B cell (primary cell): ENCODE measurements at regions of chr21 and their contacts with region 1.

Region 1: GRCh38 chr21:37220981-37221664 is 46.0 kb downstream of the VPS26C start:
- DNase-seq: peak; percentile 93
- ATAC-seq: peak; percentile 90
- H3K4me3 ChIP-seq: peak overlapping the region; percentile 36 to 86 (median 78)
- H3K4me3 Mint-ChIP-seq: peak overlapping the region; percentile 96
- H3K27ac ChIP-seq: peak overlapping the region; percentile 68 to 72
- H3K27ac Mint-ChIP-seq: peak overlapping the region; percentile 91
- H3K4me1 ChIP-seq: peaks cover 15 to 30% of the 10 kb centered on the region in 2 donors
- H3K4me1 Mint-ChIP-seq: peaks cover 27% of the 10 kb centered on the region
- H3K27me3 ChIP-seq: no peaks in the 10 kb centered on the region
- H3K27me3 Mint-ChIP-seq: no peaks in the 10 kb centered on the region
- CTCF ChIP-seq: peak; percentile 24

Region 2: GRCh38 chr21:36976882-36977651 is 244.1 kb before region 1 on chr21:
- CTCF ChIA-PET with region 1: no interaction called
- POLR2A ChIA-PET with region 1: no interaction called
- intact Hi-C with region 1: loop called (anchors 2 kb)
- DNase-seq: peak; percentile 76
- ATAC-seq: peak; percentile 88
- H3K4me3 ChIP-seq: no peak overlapping the region
- H3K4me3 Mint-ChIP-seq: peak overlapping the region; percentile 47
- H3K27ac ChIP-seq: no peak overlapping the region
- H3K27ac Mint-ChIP-seq: peak overlapping the region; percentile 77
- H3K4me1 ChIP-seq: peaks cover 16 to 22% of the 10 kb centered on the region in 2 donors
- H3K4me1 Mint-ChIP-seq: peaks cover 24% of the 10 kb centered on the region
- H3K27me3 ChIP-seq: peaks cover 0 to 13% (median 5%) of the 10 kb centered on the region in 4 experiments
- H3K27me3 Mint-ChIP-seq: peaks cover 3% of the 10 kb centered on the region
- CTCF ChIP-seq: peak; percentile 72

Region 3: DNA sequence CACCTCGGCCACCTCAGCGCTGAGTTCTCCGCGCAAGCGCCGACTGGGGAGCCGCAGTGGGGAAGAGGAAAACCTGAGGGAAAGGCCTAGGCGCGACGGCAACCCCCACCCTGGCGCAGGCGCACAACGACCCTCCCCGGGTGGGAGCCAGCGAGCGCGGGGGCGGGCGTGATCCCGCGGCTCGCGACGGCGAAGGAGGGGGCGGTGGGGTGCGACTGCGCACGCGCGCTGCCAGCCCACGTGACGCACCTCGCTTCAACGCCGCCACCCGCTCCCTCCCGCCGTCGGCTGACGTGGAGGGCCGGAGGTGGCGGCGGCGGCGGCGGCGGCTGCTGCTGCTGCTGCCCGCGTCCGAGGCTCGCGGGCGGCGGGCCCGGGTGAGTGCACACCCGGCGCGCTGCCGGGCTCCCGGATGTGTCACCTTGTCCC is 148.1 kb before region 1 on chr21 and contains the starts of genes PIGP and TTC3:
- CTCF ChIA-PET with region 1: no interaction called
- POLR2A ChIA-PET with region 1: no interaction called
- intact Hi-C with region 1: loop called (anchors 2 kb)
- DNase-seq: peak; percentile 98
- ATAC-seq: peak; percentile 67
- H3K4me3 ChIP-seq: peak within 1 kb of the TSS; percentile 80 to 92 (median 86)
- H3K4me3 Mint-ChIP-seq: peak within 1 kb of the TSS; percentile 98
- H3K27ac ChIP-seq: peak within 1 kb of the TSS; percentile 98
- H3K27ac Mint-ChIP-seq: peak within 1 kb of the TSS; percentile 99
- H3K4me1 ChIP-seq: peaks cover 22 to 23% of the 10 kb centered on the region in 2 donors
- H3K4me1 Mint-ChIP-seq: peaks cover 46% of the 10 kb centered on the region
- H3K27me3 ChIP-seq: no peaks in the 10 kb centered on the region
- H3K27me3 Mint-ChIP-seq: no peaks in the 10 kb centered on the region
- CTCF ChIP-seq: no peak
- total RNA-seq, gene PIGP: 21.7 and 22.7 TPM in 2 replicates
- total RNA-seq, gene TTC3: 163 and 191 TPM in 2 replicates

Region 4: GRCh38 chr21:37208056-37208721 is 12.9 kb before region 1 on chr21:
- CTCF ChIA-PET with region 1: interaction called, 3 read pairs
- POLR2A ChIA-PET with region 1: no interaction called
- intact Hi-C with region 1: loop called (anchors 1 kb)
- DNase-seq: peak; percentile 80
- ATAC-seq: peak; percentile 65
- H3K4me3 ChIP-seq: peak overlapping the region in 4 of 5 experiments; percentile 12 to 68 (median 34)
- H3K4me3 Mint-ChIP-seq: peak overlapping the region; percentile 76
- H3K27ac ChIP-seq: peak overlapping the region; percentile 54 to 79
- H3K27ac Mint-ChIP-seq: peak overlapping the region; percentile 78
- H3K4me1 ChIP-seq: peaks cover 27 to 34% of the 10 kb centered on the region in 2 donors
- H3K4me1 Mint-ChIP-seq: peaks cover 40% of the 10 kb centered on the region
- H3K27me3 ChIP-seq: no peaks in the 10 kb centered on the region
- H3K27me3 Mint-ChIP-seq: no peaks in the 10 kb centered on the region
- CTCF ChIP-seq: no peak

Region 5: GRCh38 chr21:37257967-37258877 is 37.1 kb after region 1 on chr21:
- CTCF ChIA-PET with region 1: interaction called, 3 read pairs
- POLR2A ChIA-PET with region 1: no interaction called
- intact Hi-C with region 1: loop called (anchors 2 kb)
- DNase-seq: peak; percentile 86
- ATAC-seq: peak; percentile 56
- H3K4me3 ChIP-seq: peak overlapping the region; percentile 59 to 85 (median 72)
- H3K4me3 Mint-ChIP-seq: peak overlapping the region; percentile 86
- H3K27ac ChIP-seq: peak overlapping the region; percentile 9 to 78
- H3K27ac Mint-ChIP-seq: peak overlapping the region; percentile 57
- H3K4me1 ChIP-seq: peaks cover 12 to 22% of the 10 kb centered on the region in 2 donors
- H3K4me1 Mint-ChIP-seq: peaks cover 31% of the 10 kb centered on the region
- H3K27me3 ChIP-seq: no peaks in the 10 kb centered on the region
- H3K27me3 Mint-ChIP-seq: no peaks in the 10 kb centered on the region
- CTCF ChIP-seq: no peak

Region 6: GRCh38 chr21:37267269-37268184 is 46.4 kb after region 1 on chr21 and contains the start of gene VPS26C:
- CTCF ChIA-PET with region 1: interaction called, 9 read pairs
- POLR2A ChIA-PET with region 1: interaction called, 5 read pairs
- intact Hi-C with region 1: loop called (anchors 1 kb)
- DNase-seq: peak; percentile 100
- ATAC-seq: peak; percentile 86
- H3K4me3 ChIP-seq: peak within 1 kb of the TSS; percentile 66 to 99 (median 99)
- H3K4me3 Mint-ChIP-seq: peak within 1 kb of the TSS; percentile 96
- H3K27ac ChIP-seq: peak within 1 kb of the TSS; percentile 99
- H3K27ac Mint-ChIP-seq: peak within 1 kb of the TSS; percentile 99
- H3K4me1 ChIP-seq: peaks cover 14% of the 10 kb centered on the region in 2 donors
- H3K4me1 Mint-ChIP-seq: peaks cover 35% of the 10 kb centered on the region
- H3K27me3 ChIP-seq: peaks cover 0 to 3% (median 0%) of the 10 kb centered on the region in 4 experiments
- H3K27me3 Mint-ChIP-seq: no peaks in the 10 kb centered on the region
- CTCF ChIP-seq: no peak
- total RNA-seq, gene VPS26C: 58.6 and 59.6 TPM in 2 replicates